ENCODE measurements at regions of chr14 and their contacts with region 1.

Region 1: DNA sequence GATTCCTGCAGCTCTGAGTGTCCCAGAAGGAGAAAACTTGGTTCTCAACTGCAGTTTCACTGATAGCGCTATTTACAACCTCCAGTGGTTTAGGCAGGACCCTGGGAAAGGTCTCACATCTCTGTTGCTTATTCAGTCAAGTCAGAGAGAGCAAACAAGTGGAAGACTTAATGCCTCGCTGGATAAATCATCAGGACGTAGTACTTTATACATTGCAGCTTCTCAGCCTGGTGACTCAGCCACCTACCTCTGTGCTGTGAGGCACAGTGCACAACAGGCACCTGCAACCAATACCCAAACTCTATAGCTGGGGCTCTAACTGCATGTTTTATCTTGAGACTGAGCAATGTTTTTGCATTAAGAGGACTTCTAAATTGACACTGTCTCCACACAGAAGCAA is 379.2 kb upstream of the OR4E1 start:
- DNase-seq: no peak

Region 2: DNA sequence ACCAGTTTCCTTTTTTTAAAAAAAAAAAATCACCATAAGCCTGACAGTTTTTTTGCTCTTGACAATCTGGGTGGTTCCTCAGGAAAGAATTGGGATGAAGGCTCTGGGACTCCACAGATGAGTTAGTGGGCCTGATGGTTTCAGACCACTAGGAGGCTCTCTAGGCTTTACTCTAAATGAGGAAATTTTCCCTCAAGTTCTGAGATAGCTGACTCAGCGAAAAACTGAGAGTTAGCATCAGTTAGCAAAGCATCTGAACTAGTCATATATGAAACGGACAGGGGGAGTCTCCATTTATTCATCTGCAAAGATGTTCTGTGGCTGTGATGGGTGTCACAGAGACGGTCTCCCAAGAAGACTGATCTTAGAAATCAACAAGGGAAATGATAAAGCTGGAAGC is 64.9 kb before region 1 on chr14:
- intact Hi-C with region 1: no loop called
- DNase-seq: no peak

Region 3: DNA sequence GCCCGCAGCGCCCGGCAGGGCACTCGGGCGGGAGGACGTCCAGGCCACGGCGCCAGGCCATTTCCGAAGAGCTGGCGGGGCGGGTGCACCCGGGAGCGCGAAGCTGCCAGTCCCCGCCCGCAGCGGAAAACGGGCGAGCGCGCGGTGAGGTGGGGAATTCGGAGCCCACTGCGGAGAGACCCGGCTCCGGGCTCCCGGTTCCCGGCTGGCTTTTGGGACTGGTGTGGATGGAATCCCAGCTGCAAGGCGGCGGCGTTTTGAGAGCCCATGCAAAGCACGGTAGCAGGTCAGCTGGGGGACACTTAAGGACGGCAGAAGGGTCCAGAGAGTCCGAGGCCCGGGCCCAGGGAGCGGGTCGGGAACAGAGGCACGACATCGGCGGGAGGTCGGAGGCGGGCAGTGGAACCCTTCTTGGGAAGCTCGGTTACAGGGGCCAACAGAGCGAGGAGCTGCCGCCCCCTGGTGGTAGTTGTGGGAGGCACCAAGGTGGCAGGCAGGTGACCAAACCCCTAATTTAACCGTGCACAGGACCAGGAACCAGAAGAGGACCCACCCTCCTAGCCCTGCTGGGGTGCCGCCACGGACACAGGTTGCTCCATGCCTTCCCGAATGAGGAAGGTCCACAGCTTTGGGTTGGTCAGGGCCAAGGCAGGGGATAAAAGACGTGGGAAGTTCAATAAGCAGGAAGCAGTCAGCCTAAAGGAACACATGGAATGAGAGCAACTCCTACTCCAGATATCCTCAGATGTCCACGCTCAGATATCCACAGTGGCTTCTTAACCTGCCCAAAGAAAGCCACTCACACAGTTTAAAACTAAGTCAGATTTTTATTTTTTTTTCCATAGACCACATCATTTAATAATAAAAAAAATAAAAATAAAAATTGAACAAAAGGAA is 1005.2 kb after region 1 on chr14:
- intact Hi-C with region 1: loop called in 1 of 2 experiments (anchors 5 kb)
- DNase-seq: peak; percentile 96